Ascending aorta (tissue), 2 donors: ENCODE measurements at regions of chr6 and their contacts with region 1.

Region 1: GRCh38 chr6:75115481-75115880 is 90.4 kb downstream of the COL12A1 start:
- DNase-seq: no peak
- H3K4me3 ChIP-seq: peak overlapping the region in 1 of 2 donors; percentile 35
- H3K27ac ChIP-seq: peak overlapping the region; percentile 52 to 66
- H3K4me1 ChIP-seq: peaks cover 0 to 11% of the 10 kb centered on the region in 2 donors
- H3K27me3 ChIP-seq: no peaks in the 10 kb centered on the region
- CTCF ChIP-seq: no peak

Region 2: DNA sequence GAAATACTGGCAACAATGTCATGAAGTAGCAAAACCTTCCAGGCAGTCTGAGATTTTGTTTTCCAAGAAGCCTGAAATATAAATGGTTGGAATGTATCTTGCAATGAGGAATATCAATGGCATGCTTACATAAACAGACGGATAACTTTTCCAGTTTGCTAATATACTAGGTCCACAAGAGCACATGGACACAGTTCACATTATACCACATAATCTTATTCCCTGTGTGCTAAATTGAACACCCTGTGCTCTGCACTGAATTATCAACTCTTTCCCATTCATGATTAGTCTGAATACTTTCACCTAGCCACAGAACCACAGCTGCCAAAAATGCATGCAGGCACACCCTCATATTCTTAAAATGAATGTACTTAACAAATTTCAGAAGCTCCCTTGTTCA is 183.9 kb before region 1 on chr6:
- intact Hi-C with region 1: loop called (anchors 5 kb)
- DNase-seq: no peak
- H3K4me3 ChIP-seq: no peak overlapping the region
- H3K27ac ChIP-seq: peak overlapping the region in 1 of 2 donors; percentile 62
- H3K4me1 ChIP-seq: peaks cover 0 to 17% of the 10 kb centered on the region in 2 donors
- H3K27me3 ChIP-seq: no peaks in the 10 kb centered on the region
- CTCF ChIP-seq: no peak

Region 3: GRCh38 chr6:75171567-75171966 is 56.1 kb after region 1 on chr6:
- intact Hi-C with region 1: no loop called
- DNase-seq: no peak
- H3K4me3 ChIP-seq: no peak overlapping the region
- H3K27ac ChIP-seq: peak overlapping the region in 1 of 2 donors; percentile 12
- H3K4me1 ChIP-seq: peaks cover 0 to 11% of the 10 kb centered on the region in 2 donors
- H3K27me3 ChIP-seq: no peaks in the 10 kb centered on the region
- CTCF ChIP-seq: no peak